K562 (cell line): ENCODE measurements at regions of chr1 and their contacts with region 1.

Region 1: DNA sequence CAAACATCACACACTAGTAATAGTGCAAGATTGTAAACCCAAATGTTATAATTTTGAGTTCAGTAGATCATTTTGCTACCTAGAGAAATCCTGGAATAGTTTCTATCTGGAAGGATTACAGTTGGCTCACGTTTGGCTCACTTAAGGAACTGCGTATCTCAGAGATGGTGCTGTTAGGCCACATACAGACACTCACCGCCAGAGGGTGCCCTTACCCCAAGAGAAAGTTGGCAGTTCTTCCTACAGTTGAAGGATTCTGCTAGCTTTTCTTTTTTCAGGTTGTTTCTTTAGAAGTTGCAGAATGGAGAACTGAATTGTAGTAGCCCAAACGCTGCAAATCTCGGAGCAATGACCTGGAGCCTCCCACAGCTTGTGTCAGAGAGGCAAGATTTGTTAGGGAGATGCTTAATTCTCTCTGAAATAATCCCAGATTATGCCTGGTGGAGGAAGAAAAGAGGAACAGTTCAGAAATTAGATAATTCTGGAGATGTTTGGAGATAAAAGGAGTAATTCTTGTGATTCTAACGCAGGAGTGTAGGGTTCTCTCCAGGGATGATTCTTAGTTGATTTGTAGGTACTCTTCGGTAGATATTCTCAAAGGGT is 87.9 kb upstream of the PAPPA2 start:
- DNase-seq: peak; percentile 70 to 84 (median 74)
- ATAC-seq: peak; percentile 99
- H3K4me3 ChIP-seq: no peak overlapping the region
- H3K27ac ChIP-seq: no peak overlapping the region
- H3K4me1 ChIP-seq: no peaks in the 10 kb centered on the region
- H3K27me3 ChIP-seq: no peaks in the 10 kb centered on the region
- CTCF ChIP-seq: peak; percentile 82 to 91 (median 90)
- EP300 ChIP-seq: no peak
- POLR2A ChIP-seq: no peak
- RAD21 ChIP-seq: peak; percentile 93 to 94

Region 2: GRCh38 chr1:176466514-176467220 is 91.6 kb after region 1 on chr1:
- CTCF ChIA-PET with region 1: interaction called, 4 read pairs
- POLR2A ChIA-PET with region 1: no interaction called
- in situ Hi-C with region 1: no loop called
- intact Hi-C with region 1: loop called (anchors 1 kb)
- DNase-seq: peak; percentile 19 to 52 (median 44)
- ATAC-seq: peak; percentile 89
- H3K4me3 ChIP-seq: no peak overlapping the region
- H3K27ac ChIP-seq: no peak overlapping the region
- H3K4me1 ChIP-seq: no peaks in the 10 kb centered on the region
- H3K27me3 ChIP-seq: no peaks in the 10 kb centered on the region
- CTCF ChIP-seq: peak; percentile 53 to 70 (median 65)
- EP300 ChIP-seq: no peak
- POLR2A ChIP-seq: no peak
- RAD21 ChIP-seq: peak; percentile 42 to 56

Region 3: GRCh38 chr1:176691251-176692228 is 316.5 kb after region 1 on chr1:
- CTCF ChIA-PET with region 1: no interaction called
- POLR2A ChIA-PET with region 1: no interaction called
- in situ Hi-C with region 1: no loop called
- intact Hi-C with region 1: loop called (anchors 1 kb)
- DNase-seq: peak; percentile 35 to 76 (median 49)
- ATAC-seq: peak; percentile 91
- H3K4me3 ChIP-seq: no peak overlapping the region
- H3K27ac ChIP-seq: no peak overlapping the region
- H3K4me1 ChIP-seq: no peaks in the 10 kb centered on the region; a peak in 1 of 5 replicates
- H3K27me3 ChIP-seq: 0 out of 5 replicates have a peak, but pooled peaks cover 0 to 3% of the 10 kb centered on the region in 2 experiments
- CTCF ChIP-seq: peak; percentile 76 to 80 (median 80)
- EP300 ChIP-seq: no peak
- POLR2A ChIP-seq: no peak
- RAD21 ChIP-seq: peak; percentile 77 to 78

Region 4: GRCh38 chr1:176843352-176844297 is 468.6 kb after region 1 on chr1:
- CTCF ChIA-PET with region 1: interaction called, 18 read pairs
- POLR2A ChIA-PET with region 1: no interaction called
- in situ Hi-C with region 1: loop called (anchors 10 kb)
- intact Hi-C with region 1: loop called (anchors 1 kb)
- DNase-seq: peak; percentile 19 to 67 (median 34)
- ATAC-seq: peak; percentile 71
- H3K4me3 ChIP-seq: no peak overlapping the region
- H3K27ac ChIP-seq: no peak overlapping the region
- H3K4me1 ChIP-seq: peaks cover 0 to 10% of the 10 kb centered on the region in 2 experiments; a peak in 3 of 5 replicates
- H3K27me3 ChIP-seq: peaks cover 4 to 6% of the 10 kb centered on the region in 2 experiments; a peak in 3 of 5 replicates
- CTCF ChIP-seq: peak; percentile 54 to 87 (median 62); a peak in 5 of 6 replicates
- EP300 ChIP-seq: no peak
- POLR2A ChIP-seq: no peak
- RAD21 ChIP-seq: peak; percentile 94 to 95

Region 5: DNA sequence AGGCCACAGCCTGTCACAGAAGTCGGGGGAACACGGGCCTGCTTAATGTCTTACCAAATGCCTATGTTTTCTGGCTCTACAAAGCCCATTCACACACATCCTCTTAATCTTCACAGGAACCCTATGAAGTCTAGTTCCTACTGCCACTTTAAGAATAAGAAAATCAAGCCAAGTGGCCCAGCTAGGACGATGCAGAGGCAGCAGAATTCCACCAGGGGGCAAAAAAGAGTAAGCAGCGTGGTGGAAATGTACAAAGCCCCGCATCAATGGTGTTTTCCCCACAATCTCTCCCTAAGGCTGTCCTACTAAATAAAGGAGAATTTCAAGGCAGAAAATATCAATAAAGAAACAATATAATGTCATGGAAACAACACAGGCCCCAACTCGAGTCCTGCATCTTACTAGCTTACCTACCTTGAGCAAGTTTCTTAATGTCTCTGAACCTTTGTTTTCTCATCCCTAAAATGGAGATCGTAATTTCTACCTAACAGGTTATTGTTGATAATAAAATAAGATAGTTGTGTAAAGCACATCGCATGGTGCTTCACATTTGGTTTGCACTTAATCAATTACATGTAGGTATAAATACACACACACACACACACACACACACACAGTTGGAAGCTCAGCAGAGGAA is 1573.4 kb after region 1 on chr1:
- CTCF ChIA-PET with region 1: no interaction called
- POLR2A ChIA-PET with region 1: no interaction called
- in situ Hi-C with region 1: no loop called
- intact Hi-C with region 1: loop called (anchors 1 kb)
- DNase-seq: peak; percentile 54 to 64 (median 62)
- ATAC-seq: peak; percentile 86
- H3K4me3 ChIP-seq: no peak overlapping the region
- H3K27ac ChIP-seq: no peak overlapping the region
- H3K4me1 ChIP-seq: no peaks in the 10 kb centered on the region
- H3K27me3 ChIP-seq: peaks cover 0 to 6% of the 10 kb centered on the region in 2 experiments; a peak in 1 of 5 replicates
- CTCF ChIP-seq: peak; percentile 78 to 84 (median 80)
- EP300 ChIP-seq: no peak
- POLR2A ChIP-seq: no peak
- RAD21 ChIP-seq: peak in 1 of 2 experiments; percentile 51; a peak in 2 of 4 replicates